ENCODE measurements at regions of chr17 and their contacts with region 1.

Region 1: GRCh38 chr17:7873051-7873450 is 15.2 kb downstream of the CYB5D1 start:
- DNase-seq: no peak
- H3K4me3 ChIP-seq: no peak overlapping the region
- H3K27ac ChIP-seq: no peak overlapping the region
- H3K4me1 ChIP-seq: no peaks in the 10 kb centered on the region
- H3K27me3 ChIP-seq: no peaks in the 10 kb centered on the region
- CTCF ChIP-seq: no peak
- EP300 ChIP-seq: no peak
- POLR2A ChIP-seq: no peak

Region 2: GRCh38 chr17:8109661-8110464 is 236.8 kb after region 1 on chr17:
- intact Hi-C with region 1: loop called (anchors 5 kb)
- DNase-seq: no peak
- H3K4me3 ChIP-seq: peak overlapping the region in 2 of 4 donors; percentile 13 to 17
- H3K27ac ChIP-seq: no peak overlapping the region
- H3K4me1 ChIP-seq: peaks cover 0 to 10% (median 8%) of the 10 kb centered on the region in 4 donors
- H3K27me3 ChIP-seq: peaks cover 16 to 69% (median 68%) of the 10 kb centered on the region in 3 donors
- CTCF ChIP-seq: peak; percentile 33 to 70 (median 61)
- EP300 ChIP-seq: no peak
- POLR2A ChIP-seq: no peak

Measured in sigmoid colon (tissue), 7 donors.